Esophagus muscularis mucosa (tissue), 4 donors: ENCODE measurements at regions of chr5 and their contacts with region 1.

Region 1: GRCh38 chr5:16934123-16934522 is 2.0 kb downstream of the MYO10 start:
- DNase-seq: no peak
- H3K4me3 ChIP-seq: peak overlapping the region; percentile 62 to 73 (median 68)
- H3K27ac ChIP-seq: no peak overlapping the region
- H3K4me1 ChIP-seq: peaks cover 9 to 30% (median 29%) of the 10 kb centered on the region in 4 donors
- H3K27me3 ChIP-seq: peaks cover 0 to 83% (median 20%) of the 10 kb centered on the region in 4 donors
- CTCF ChIP-seq: peak; percentile 45 to 62 (median 49)
- EP300 ChIP-seq: no peak
- POLR2A ChIP-seq: no peak

Region 2: GRCh38 chr5:17132444-17133083 is 198.4 kb after region 1 on chr5:
- intact Hi-C with region 1: loop called (anchors 5 kb)
- DNase-seq: no peak
- H3K4me3 ChIP-seq: no peak overlapping the region
- H3K27ac ChIP-seq: no peak overlapping the region
- H3K4me1 ChIP-seq: no peaks in the 10 kb centered on the region
- H3K27me3 ChIP-seq: peaks cover 0 to 6% (median 0%) of the 10 kb centered on the region in 4 donors
- CTCF ChIP-seq: peak; percentile 37 to 70 (median 50)
- EP300 ChIP-seq: no peak
- POLR2A ChIP-seq: no peak

Region 3: DNA sequence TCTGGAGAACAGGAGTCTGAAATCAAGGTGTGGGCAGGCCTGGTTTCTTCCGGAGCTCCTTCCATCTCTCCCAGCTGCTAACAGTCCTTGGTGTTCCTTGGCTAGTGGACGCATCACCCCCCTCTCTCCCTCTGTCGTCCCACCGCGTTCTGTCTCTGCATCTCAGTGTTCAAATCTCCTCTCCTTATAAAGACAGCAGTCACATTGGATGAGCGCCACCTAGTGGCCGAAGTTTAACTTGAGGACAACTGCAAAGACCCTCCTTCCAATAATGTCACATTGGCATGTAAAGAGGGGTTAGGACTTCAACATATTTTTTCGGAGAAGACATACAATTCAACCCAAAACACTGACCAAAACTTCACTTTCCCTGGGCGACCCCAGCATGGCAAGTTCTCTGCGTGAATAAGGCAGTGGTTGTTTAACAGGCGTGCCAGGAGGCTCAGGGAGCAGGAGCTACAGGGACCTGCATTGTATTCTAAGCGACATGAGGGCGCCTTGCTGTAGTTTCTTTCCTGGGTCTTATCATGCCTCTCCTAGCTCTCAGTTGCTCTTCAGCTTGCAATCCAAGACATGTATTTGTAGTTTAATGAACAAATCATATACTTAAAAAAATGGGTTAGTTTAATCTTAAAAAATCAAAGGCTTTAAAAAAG is 255.4 kb after region 1 on chr5:
- intact Hi-C with region 1: loop called (anchors 10 kb)
- DNase-seq: peak; percentile 94
- H3K4me3 ChIP-seq: no peak overlapping the region
- H3K27ac ChIP-seq: no peak overlapping the region
- H3K4me1 ChIP-seq: peaks cover 3 to 15% (median 10%) of the 10 kb centered on the region in 4 donors
- H3K27me3 ChIP-seq: peaks cover 0 to 10% (median 0%) of the 10 kb centered on the region in 4 donors
- CTCF ChIP-seq: peak; percentile 45 to 73 (median 66)
- EP300 ChIP-seq: no peak
- POLR2A ChIP-seq: no peak